ENCODE measurements at regions of chr6 and their contacts with region 1.

Region 1: DNA sequence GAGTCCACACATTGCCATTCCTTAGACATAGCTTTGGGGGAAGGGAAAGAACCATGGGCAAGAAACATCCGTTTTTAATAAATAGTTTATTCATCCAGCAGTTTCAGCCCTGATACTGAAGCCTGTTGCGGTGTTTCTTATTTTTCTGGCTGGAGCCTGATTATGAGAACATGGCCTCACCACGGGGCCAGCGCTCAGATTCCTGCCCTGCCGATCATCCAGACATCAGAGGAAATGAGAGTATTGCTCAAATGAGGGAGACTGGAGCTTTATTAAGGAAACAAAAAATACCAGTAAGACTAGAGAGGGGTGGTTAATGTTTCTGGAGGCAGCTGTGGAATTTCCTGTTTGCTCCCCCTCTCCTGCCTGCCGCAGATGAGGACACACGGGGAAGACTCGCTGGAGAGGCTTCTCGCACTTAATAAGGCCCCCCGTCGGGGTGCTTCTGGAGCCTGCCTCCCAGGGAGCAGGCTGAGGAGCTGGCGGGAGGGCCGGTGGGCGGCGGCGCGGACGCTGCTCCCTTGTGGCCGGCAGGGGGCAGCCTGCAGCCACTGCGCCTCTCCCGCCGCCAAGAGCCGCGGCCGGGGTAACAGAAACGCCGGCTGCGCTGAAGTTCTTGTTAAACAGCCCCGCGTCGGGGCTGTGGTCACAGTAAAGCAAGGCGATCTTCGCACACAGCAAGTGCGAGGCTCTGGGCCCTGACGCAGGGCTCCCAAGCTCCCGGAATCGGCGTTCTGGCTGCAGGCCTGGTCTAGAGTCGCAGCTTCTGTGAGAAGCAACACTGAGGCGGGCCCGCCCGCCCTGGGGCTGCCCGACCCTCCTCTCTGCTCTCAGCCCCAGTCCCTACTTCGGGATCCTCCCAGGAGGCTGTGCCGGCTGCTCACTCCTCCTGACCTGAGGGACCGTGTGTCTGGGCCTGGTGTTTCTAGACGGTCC is 17.5 kb downstream of the LEMD2 start:
- DNase-seq: no peak
- ATAC-seq: peak; percentile 83
- H3K4me3 ChIP-seq: no peak overlapping the region
- H3K27ac ChIP-seq: peak overlapping the region; percentile 69
- H3K4me1 ChIP-seq: peaks cover 23% of the 10 kb centered on the region
- H3K27me3 ChIP-seq: no peaks in the 10 kb centered on the region
- CTCF ChIP-seq: peak; percentile 98

Region 2: DNA sequence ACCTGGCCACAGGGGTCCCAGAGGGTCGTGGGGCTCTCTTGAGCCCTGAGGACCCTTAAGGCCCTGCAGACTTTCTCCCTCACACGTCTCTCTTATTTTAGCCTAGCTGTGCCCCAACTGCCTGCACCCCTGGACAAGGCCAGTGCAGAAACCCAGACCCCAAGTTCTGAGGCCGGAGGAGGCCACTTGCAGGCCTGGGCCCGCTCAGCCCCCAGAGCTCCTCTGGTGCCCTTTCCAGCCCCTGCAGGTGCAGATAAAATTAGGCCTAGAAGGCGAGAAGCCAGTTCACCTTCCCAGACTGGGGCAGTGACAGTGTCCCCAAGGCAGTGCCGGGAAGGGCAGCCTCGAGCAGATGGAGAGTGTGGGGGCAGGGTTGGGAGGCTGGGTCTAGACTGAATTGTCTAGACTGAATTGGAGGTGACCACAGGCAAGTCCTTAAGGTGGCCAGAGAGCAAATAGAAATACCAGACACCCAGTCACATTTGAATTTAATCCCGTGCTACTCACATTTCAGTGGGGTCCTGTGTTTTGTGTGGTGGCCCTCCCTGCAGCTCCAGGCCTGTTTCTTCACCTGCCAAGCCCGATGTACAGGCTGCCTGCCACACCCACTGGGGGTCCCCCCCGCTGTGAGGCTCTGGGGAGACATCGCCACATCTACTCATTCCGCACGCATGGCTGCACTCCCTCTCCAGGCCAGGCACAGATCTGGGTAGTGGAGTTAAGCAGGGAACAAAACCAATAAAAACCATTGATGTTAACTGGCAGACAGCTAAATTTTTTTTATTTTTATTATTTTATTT is 16.1 kb before region 1 on chr6:
- CTCF ChIA-PET with region 1: no interaction called
- POLR2A ChIA-PET with region 1: no interaction called
- in situ Hi-C with region 1: no loop called
- intact Hi-C with region 1: no loop called
- DNase-seq: no peak
- ATAC-seq: no peak
- H3K4me3 ChIP-seq: no peak overlapping the region
- H3K27ac ChIP-seq: no peak overlapping the region
- H3K4me1 ChIP-seq: peaks cover 12% of the 10 kb centered on the region
- H3K27me3 ChIP-seq: no peaks in the 10 kb centered on the region
- CTCF ChIP-seq: no peak

Region 3: GRCh38 chr6:34027445-34027936 is 256.1 kb after region 1 on chr6:
- CTCF ChIA-PET with region 1: interaction called, 3 read pairs
- POLR2A ChIA-PET with region 1: no interaction called
- in situ Hi-C with region 1: no loop called
- intact Hi-C with region 1: loop called (anchors 2 kb)
- DNase-seq: no peak
- ATAC-seq: peak; percentile 89
- H3K4me3 ChIP-seq: no peak overlapping the region
- H3K27ac ChIP-seq: no peak overlapping the region
- H3K4me1 ChIP-seq: peaks cover 3% of the 10 kb centered on the region; the same call in 1 of the 2 replicates
- H3K27me3 ChIP-seq: no peaks in the 10 kb centered on the region
- CTCF ChIP-seq: peak; percentile 94

Measured in Panc1 (cell line).